ENCODE measurements at regions of chr20 and their contacts with region 1.

Region 1: GRCh38 chr20:35146920-35147574 is at the start of gene EDEM2:
- DNase-seq: peak; percentile 95
- H3K4me3 Mint-ChIP-seq: peak within 1 kb of the TSS; percentile 94
- H3K27ac Mint-ChIP-seq: peak within 1 kb of the TSS; percentile 95
- H3K4me1 Mint-ChIP-seq: peaks cover 11% of the 10 kb centered on the region
- H3K27me3 Mint-ChIP-seq: no peaks in the 10 kb centered on the region
- CTCF ChIP-seq: no peak
- total RNA-seq, gene EDEM2: 23.6 and 30.2 TPM in 2 replicates

Region 2: GRCh38 chr20:35092524-35093266 is 54.4 kb before region 1 on chr20 and contains the start of gene TRPC4AP:
- CTCF ChIA-PET with region 1: interaction called, 71 read pairs
- POLR2A ChIA-PET with region 1: interaction called, 41 read pairs
- intact Hi-C with region 1: loop called (anchors 1 kb)
- DNase-seq: peak; percentile 89
- H3K4me3 Mint-ChIP-seq: peak within 1 kb of the TSS; percentile 78
- H3K27ac Mint-ChIP-seq: peak within 1 kb of the TSS; percentile 55
- H3K4me1 Mint-ChIP-seq: peaks cover 27% of the 10 kb centered on the region
- H3K27me3 Mint-ChIP-seq: no peaks in the 10 kb centered on the region
- CTCF ChIP-seq: peak; percentile 96
- total RNA-seq, gene TRPC4AP: 51.8 and 56.3 TPM in 2 replicates

Region 3: DNA sequence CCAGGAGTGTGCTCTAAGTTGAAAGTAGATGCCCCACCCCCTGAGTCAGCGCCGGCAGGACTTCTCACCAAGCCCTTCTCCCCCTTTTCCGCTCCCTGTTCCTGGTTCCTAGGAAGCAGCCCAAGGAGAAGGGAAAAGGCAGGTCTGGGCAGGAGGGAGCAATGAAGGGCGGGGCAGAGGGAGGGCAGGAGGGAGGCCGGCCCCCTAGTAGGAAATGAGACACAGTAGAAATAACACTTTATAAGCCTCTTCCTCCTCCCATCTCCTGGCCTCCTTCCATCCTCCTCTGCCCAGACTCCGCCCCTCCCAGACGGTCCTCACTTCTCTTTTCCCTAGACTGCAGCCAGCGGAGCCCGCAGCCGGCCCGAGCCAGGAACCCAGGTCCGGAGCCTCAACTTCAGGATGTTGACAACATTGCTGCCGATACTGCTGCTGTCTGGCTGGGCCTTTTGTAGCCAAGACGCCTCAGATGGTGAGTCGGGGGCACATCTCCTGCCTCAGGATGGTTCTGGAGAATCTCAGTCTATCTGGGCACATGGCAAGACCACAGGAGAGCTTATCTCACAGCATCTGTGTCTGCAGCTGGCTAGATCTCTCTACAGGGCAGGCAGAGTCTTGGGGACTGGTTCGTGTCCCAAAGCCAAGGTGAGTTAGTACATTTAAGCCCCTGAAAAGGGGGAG is 24.8 kb after region 1 on chr20 and contains the start of gene PROCR:
- CTCF ChIA-PET with region 1: interaction called, 9 read pairs
- POLR2A ChIA-PET with region 1: interaction called, 41 read pairs
- intact Hi-C with region 1: loop called (anchors 1 kb)
- DNase-seq: peak; percentile 99
- H3K4me3 Mint-ChIP-seq: peak within 1 kb of the TSS; percentile 82
- H3K27ac Mint-ChIP-seq: peak within 1 kb of the TSS; percentile 77
- H3K4me1 Mint-ChIP-seq: peaks cover 26% of the 10 kb centered on the region
- H3K27me3 Mint-ChIP-seq: no peaks in the 10 kb centered on the region
- CTCF ChIP-seq: no peak
- total RNA-seq, gene PROCR: 27.4 and 34.6 TPM in 2 replicates

Region 4: GRCh38 chr20:35207950-35208611 is 61.0 kb after region 1 on chr20:
- CTCF ChIA-PET with region 1: interaction called, 182 read pairs
- POLR2A ChIA-PET with region 1: interaction called, 66 read pairs
- intact Hi-C with region 1: loop called (anchors 1 kb)
- DNase-seq: peak; percentile 84
- H3K4me3 Mint-ChIP-seq: no peak overlapping the region
- H3K27ac Mint-ChIP-seq: no peak overlapping the region
- H3K4me1 Mint-ChIP-seq: no peaks in the 10 kb centered on the region
- H3K27me3 Mint-ChIP-seq: no peaks in the 10 kb centered on the region
- CTCF ChIP-seq: peak; percentile 86

Region 5: DNA sequence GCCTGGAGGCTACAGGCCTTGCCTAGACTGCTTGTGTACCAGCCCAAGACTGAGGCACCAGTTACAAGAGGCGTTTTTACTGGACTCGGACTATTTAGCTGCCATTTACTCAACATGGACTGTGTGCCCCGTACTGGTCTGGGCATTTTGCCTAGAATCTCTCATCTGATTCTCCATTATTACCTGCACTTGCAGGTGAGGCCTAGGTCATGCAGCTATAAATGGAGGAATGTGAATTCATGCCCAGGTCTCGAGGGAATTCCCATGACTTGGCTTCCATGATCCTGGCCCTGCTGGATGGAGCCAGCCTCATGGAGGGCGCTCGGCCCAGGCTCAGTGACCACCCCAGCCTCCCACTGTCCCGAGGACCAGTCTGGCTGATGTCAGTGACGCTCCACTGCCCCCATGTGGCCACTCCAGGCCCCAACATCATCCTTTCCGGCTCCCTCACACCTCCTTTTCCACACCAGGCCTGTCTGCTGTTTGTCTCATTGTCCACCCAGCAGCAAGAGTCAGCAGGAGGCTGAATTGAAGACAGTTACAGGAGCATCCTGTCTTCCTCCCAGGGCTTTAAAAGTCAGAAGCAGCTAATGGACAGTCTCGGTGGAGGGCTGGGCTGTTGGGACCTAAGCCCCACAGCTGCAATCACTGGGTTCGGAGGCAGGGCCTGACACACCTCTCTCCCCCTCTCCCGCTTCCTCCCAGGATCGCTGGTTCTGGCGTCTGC is 122.2 kb after region 1 on chr20:
- CTCF ChIA-PET with region 1: interaction called, 44 read pairs
- POLR2A ChIA-PET with region 1: interaction called, 9 read pairs
- intact Hi-C with region 1: loop called (anchors 1 kb)
- DNase-seq: peak; percentile 72
- H3K4me3 Mint-ChIP-seq: no peak overlapping the region
- H3K27ac Mint-ChIP-seq: no peak overlapping the region
- H3K4me1 Mint-ChIP-seq: peaks cover 11% of the 10 kb centered on the region
- H3K27me3 Mint-ChIP-seq: no peaks in the 10 kb centered on the region
- CTCF ChIP-seq: peak; percentile 82

Region 6: DNA sequence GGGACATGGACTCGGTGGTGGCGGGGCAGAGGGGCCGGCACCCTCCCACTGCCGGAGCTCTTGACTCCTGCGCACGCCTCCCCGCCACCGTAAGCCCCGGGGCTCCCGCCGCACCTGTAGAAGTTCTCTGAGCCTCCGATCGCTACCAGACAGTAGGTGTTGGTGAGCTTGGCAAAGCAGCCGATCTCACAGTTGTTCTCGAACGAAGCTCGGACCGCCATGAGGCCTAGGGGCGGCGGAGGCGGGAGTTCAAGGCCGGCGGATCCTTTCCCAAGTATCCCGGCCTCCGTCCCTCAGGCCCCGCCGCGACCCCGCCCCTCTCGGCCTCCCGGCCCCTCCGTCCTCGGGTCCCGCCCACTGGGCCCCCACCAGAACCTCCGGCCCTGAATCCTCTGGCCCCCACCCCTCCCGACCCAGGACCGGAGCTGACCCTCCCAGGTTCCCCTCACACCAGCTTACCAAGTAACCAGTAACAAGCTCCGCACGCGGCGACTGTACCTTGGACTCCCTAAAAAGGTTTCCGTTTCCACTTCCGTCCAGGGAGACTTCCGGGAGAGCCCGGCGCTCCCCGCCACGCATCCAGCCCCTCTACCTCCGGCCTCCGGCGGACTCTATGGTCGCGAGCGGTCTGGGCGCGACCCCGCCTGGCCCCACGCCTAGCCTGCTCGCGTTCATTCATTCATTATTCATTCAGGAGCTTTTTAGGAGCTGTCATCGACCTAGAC is 137.4 kb after region 1 on chr20 and contains the start of gene EIF6:
- CTCF ChIA-PET with region 1: interaction called, 4 read pairs
- POLR2A ChIA-PET with region 1: interaction called, 26 read pairs
- intact Hi-C with region 1: no loop called
- DNase-seq: peak; percentile 86
- H3K4me3 Mint-ChIP-seq: peak within 1 kb of the TSS; percentile 89
- H3K27ac Mint-ChIP-seq: peak within 1 kb of the TSS; percentile 90
- H3K4me1 Mint-ChIP-seq: peaks cover 25% of the 10 kb centered on the region
- H3K27me3 Mint-ChIP-seq: no peaks in the 10 kb centered on the region
- CTCF ChIP-seq: no peak
- total RNA-seq, gene EIF6: 322 and 354 TPM in 2 replicates

Region 7: GRCh38 chr20:35871311-35871771 is 724.3 kb after region 1 on chr20:
- CTCF ChIA-PET with region 1: no interaction called
- POLR2A ChIA-PET with region 1: no interaction called
- intact Hi-C with region 1: no loop called
- DNase-seq: peak; percentile 76
- H3K4me3 Mint-ChIP-seq: peak overlapping the region; percentile 67
- H3K27ac Mint-ChIP-seq: peak overlapping the region; percentile 95
- H3K4me1 Mint-ChIP-seq: peaks cover 40% of the 10 kb centered on the region
- H3K27me3 Mint-ChIP-seq: no peaks in the 10 kb centered on the region
- CTCF ChIP-seq: no peak